ENCODE measurements at regions of chr20 and their contacts with region 1.

Region 1: GRCh38 chr20:32535953-32536823 is 48.9 kb downstream of the NOL4L start:
- DNase-seq: peak; percentile 88
- ATAC-seq: peak; percentile 27
- H3K4me3 Mint-ChIP-seq: peak overlapping the region; percentile 72
- H3K27ac Mint-ChIP-seq: peak overlapping the region; percentile 95
- H3K4me1 Mint-ChIP-seq: peaks cover 82% of the 10 kb centered on the region
- H3K27me3 Mint-ChIP-seq: no peaks in the 10 kb centered on the region

Region 2: DNA sequence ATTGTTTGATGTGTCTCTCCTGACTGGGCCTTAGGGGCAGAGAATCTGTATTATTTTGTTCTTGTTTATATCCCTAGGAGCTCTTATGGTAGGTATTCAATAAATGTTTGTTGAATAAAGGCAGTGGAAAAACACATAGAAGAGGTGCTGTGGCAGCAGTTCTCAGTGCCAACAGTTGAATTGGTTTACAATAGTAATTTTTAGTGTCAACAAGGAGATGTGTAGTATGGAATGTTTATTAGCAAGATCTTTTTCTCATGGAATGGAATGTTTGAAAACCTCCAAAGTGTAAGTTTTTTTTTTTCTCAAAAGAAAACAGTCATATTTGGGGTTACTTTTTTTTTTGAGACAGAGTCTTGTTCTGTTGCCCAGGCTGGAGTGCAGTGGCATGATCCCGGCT is 150.1 kb before region 1 on chr20:
- CTCF ChIA-PET with region 1: no interaction called
- POLR2A ChIA-PET with region 1: no interaction called
- intact Hi-C with region 1: no loop called
- DNase-seq: no peak
- ATAC-seq: no peak
- H3K4me3 Mint-ChIP-seq: no peak overlapping the region
- H3K27ac Mint-ChIP-seq: peak overlapping the region; percentile 23
- H3K4me1 Mint-ChIP-seq: peaks cover 59% of the 10 kb centered on the region
- H3K27me3 Mint-ChIP-seq: no peaks in the 10 kb centered on the region

Region 3: GRCh38 chr20:32484958-32485769 is 51.0 kb before region 1 on chr20:
- CTCF ChIA-PET with region 1: no interaction called
- POLR2A ChIA-PET with region 1: no interaction called
- intact Hi-C with region 1: loop called in 1 of 2 experiments (anchors 1 kb)
- DNase-seq: peak; percentile 90
- ATAC-seq: peak; percentile 85
- H3K4me3 Mint-ChIP-seq: peak overlapping the region; percentile 80
- H3K27ac Mint-ChIP-seq: peak overlapping the region; percentile 91
- H3K4me1 Mint-ChIP-seq: peaks cover 34% of the 10 kb centered on the region
- H3K27me3 Mint-ChIP-seq: no peaks in the 10 kb centered on the region

Region 4: DNA sequence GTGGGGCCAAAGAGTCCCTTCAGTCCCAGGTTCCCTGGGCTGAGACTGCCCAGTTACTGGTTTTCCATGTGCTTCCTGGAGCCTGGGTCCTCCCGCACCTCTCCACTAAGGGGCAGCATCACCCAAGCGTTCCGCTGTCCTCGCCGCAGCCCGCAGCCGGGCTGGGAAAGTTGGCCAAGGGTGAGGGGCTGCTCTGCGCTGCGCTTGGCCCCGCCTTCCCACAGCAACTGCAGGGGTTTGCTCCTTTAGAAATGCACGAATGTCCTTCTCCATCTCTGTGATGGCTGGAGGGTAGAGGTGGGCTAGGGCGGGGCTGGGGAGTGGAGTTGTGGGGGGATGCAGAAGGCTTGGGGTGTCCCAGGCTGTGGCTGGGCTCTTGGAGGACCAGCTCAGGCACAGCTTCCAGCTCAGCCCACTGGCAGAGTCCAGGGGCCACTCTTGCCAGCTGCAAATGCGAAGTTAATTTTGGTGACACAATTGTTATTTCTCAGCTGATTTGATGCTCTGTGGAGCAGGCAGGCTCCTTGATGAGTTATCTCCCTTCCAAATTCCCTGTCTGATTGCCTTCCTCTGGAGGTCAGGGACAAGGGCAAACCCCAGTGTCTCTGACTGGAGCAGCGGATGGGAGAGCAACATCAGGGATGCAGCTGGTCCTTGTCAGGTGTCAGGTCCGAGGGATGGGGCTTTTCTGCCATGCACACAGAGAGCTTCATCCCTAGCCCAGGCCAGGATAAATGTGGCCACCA is 14.2 kb before region 1 on chr20:
- CTCF ChIA-PET with region 1: interaction called, 38 read pairs
- POLR2A ChIA-PET with region 1: interaction called, 4 read pairs
- intact Hi-C with region 1: no loop called
- DNase-seq: peak; percentile 83
- ATAC-seq: peak; percentile 78
- H3K4me3 Mint-ChIP-seq: no peak overlapping the region
- H3K27ac Mint-ChIP-seq: peak overlapping the region; percentile 43
- H3K4me1 Mint-ChIP-seq: peaks cover 59% of the 10 kb centered on the region
- H3K27me3 Mint-ChIP-seq: no peaks in the 10 kb centered on the region

Region 5: DNA sequence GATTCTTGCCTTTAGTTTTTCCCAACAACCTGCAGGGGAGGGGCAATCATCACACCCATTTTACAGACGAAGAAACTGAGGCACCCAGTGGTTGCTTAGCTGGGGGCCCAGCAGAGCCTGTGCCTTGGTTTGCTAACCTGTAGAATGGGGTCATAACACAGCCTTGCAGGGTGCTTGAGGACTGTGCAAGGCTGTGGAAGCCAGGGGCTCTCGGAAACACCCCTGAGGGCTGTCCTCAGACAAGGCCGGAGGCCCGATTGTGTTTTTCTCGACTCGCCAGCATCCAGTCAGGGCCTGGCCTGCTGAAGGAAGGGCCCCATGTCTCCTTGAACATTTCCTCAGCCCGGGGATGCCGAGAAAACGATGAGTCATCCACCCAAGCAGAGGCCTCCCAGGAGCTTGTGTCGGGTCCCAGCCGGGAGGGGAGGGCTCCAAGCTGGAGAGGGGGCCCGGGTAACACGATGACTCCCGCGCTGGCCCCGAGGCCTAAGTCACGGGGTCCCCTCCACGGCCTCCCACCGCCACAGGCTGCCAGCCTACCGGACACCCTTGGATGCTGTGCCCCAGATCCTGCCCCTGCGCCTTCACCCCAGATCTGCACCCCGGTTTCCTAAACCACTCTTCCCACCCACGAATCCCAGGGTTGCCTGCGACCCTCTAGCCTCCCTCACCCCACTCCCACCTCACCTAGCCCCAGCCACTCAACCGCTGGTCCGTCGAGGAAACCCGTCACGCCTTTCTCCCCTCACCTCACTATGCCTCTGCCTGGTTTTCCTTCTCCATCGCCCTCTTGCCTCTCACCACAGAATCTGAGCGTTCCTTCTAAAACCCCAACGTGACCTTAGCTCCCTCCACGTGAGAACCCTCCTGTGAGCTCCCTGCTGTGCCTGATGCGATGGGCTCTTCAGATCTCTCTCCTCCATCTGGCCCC is 38.4 kb after region 1 on chr20:
- CTCF ChIA-PET with region 1: interaction called, 9 read pairs
- POLR2A ChIA-PET with region 1: no interaction called
- intact Hi-C with region 1: loop called in 1 of 2 experiments (anchors 2 kb)
- DNase-seq: peak; percentile 78
- ATAC-seq: peak; percentile 80
- H3K4me3 Mint-ChIP-seq: no peak overlapping the region
- H3K27ac Mint-ChIP-seq: no peak overlapping the region
- H3K4me1 Mint-ChIP-seq: peaks cover 51% of the 10 kb centered on the region
- H3K27me3 Mint-ChIP-seq: no peaks in the 10 kb centered on the region

Region 6: DNA sequence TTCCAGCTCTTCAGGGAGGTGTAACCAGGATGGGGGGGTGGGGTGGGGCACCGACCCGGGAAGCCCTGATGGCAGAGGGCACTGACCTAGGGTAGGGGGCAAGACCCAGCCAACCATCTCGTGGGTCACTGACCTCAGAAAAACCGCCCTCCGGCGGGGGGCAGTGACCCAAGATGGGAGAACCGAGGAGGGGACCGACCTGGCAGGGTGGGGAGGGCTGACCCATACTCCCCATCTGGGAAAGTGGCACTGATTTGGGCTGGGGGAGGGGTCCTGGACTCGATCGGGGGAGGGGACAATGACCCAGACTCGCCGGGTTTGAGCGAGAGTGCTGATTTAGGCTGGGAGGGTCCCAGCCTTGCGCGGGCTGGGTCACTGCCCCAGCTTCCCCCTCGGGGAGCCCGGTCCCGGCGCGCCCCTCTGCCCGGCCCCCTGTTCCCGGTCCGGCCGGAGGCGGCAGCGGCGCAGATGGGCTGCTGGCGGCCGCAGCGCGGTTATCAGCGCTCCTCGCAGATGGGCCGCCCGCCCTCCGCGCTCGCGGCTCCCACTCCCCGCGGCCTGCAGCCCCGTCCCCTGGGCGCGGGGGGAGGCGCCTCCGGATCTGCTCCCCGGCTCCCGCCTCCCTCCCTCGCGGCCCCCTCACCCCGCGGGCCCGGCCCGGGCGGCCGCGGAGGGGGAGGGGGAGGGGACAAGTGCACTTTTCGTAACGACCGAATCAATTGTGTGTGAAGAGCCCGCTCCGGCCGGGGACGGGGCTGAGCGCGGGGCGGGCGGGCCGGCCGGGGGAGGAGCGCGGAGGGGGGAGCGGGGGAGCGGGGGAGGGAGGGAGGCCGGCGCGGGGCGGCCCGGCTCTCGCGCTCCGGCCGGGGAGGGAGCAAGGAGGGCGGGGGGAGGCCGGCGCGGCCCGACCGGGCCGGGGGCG is 46.7 kb after region 1 on chr20:
- CTCF ChIA-PET with region 1: interaction called, 9 read pairs
- POLR2A ChIA-PET with region 1: no interaction called
- intact Hi-C with region 1: loop called (anchors 1 to 2 kb)
- DNase-seq: peak; percentile 49
- ATAC-seq: no peak
- H3K4me3 Mint-ChIP-seq: peak overlapping the region; percentile 52
- H3K27ac Mint-ChIP-seq: no peak overlapping the region
- H3K4me1 Mint-ChIP-seq: peaks cover 55% of the 10 kb centered on the region
- H3K27me3 Mint-ChIP-seq: peaks cover 5% of the 10 kb centered on the region

Region 7: GRCh38 chr20:32819992-32820710 is 284.0 kb after region 1 on chr20:
- CTCF ChIA-PET with region 1: no interaction called
- POLR2A ChIA-PET with region 1: no interaction called
- intact Hi-C with region 1: loop called in 1 of 2 experiments (anchors 2 kb)
- DNase-seq: peak; percentile 85
- ATAC-seq: peak; percentile 76
- H3K4me3 Mint-ChIP-seq: peak overlapping the region; percentile 87
- H3K27ac Mint-ChIP-seq: peak overlapping the region; percentile 92
- H3K4me1 Mint-ChIP-seq: peaks cover 37% of the 10 kb centered on the region
- H3K27me3 Mint-ChIP-seq: no peaks in the 10 kb centered on the region

Region 8: GRCh38 chr20:32972181-32973076 is 436.2 kb after region 1 on chr20:
- CTCF ChIA-PET with region 1: no interaction called
- POLR2A ChIA-PET with region 1: no interaction called
- intact Hi-C with region 1: loop called in 1 of 2 experiments (anchors 5 kb)
- DNase-seq: peak; percentile 88
- ATAC-seq: peak; percentile 70
- H3K4me3 Mint-ChIP-seq: no peak overlapping the region
- H3K27ac Mint-ChIP-seq: no peak overlapping the region
- H3K4me1 Mint-ChIP-seq: peaks cover 46% of the 10 kb centered on the region
- H3K27me3 Mint-ChIP-seq: no peaks in the 10 kb centered on the region

Measured in activated CD4-positive, alpha-beta T cell treated with anti-CD3 and anti-CD28 coated beads for 36 hours (primary cell).